PC-3 (cell line): ENCODE measurements at regions of chr9 and their contacts with region 1.

Region 1: DNA sequence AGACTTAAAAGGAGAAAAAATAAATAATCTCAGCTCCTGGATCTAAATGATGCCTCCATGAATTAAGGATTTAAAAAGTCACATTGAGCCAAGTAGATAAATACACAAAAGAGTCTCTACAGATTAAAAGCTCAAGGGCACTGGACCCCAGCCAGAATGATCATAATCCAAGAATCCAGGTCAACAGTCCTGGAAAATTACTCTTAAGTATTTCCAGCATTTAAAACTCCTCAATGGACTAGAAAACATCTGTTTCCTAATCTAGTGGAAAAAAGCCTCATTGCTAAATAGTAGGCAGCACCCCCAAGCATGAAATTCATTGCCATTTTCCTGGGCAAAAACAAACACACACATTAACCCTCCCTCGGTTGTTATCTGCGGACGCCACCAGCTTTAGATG is 96.8 kb downstream of the FRMD3 start:
- DNase-seq: peak; percentile 23
- ATAC-seq: no peak
- H3K4me3 ChIP-seq: no peak overlapping the region
- H3K27ac ChIP-seq: no peak overlapping the region
- H3K4me1 ChIP-seq: peaks cover 20% of the 10 kb centered on the region
- H3K27me3 ChIP-seq: no peaks in the 10 kb centered on the region
- CTCF ChIP-seq: no peak

Region 2: GRCh38 chr9:83422527-83422926 is 18.9 kb before region 1 on chr9:
- CTCF ChIA-PET with region 1: no interaction called
- POLR2A ChIA-PET with region 1: interaction called, 15 read pairs
- intact Hi-C with region 1: no loop called
- DNase-seq: no peak
- ATAC-seq: no peak
- H3K4me3 ChIP-seq: no peak overlapping the region
- H3K27ac ChIP-seq: no peak overlapping the region
- H3K4me1 ChIP-seq: peaks cover 25% of the 10 kb centered on the region
- H3K27me3 ChIP-seq: no peaks in the 10 kb centered on the region
- CTCF ChIP-seq: no peak